ENCODE measurements at regions of chr14 and their contacts with region 1.

Region 1: DNA sequence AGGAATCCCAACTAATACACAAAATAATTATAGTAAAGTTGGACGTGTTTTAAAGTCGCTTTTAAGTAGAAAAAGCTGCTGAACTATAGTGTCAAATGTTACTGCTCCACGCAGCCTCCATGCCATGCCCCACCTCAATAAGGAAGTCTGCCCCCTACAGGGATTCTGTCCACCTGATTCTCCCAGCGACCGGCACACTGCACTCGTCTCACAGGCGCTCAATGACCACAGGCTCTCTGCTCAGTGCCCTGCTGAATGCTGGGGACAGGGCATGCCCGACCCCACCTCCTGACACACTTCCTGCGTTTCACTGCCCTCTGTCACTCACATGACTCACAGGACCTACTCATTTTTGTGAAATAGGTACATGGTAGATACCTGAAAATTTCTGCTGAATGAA is 48.9 kb downstream of the BDKRB1 start:
- DNase-seq: no peak
- H3K4me3 ChIP-seq: no peak overlapping the region
- H3K27ac ChIP-seq: no peak overlapping the region
- H3K27me3 ChIP-seq: no peaks in the 10 kb centered on the region
- CTCF ChIP-seq: peak in 4 of 56 donors; percentile 6 to 19 (median 12)

Region 2: DNA sequence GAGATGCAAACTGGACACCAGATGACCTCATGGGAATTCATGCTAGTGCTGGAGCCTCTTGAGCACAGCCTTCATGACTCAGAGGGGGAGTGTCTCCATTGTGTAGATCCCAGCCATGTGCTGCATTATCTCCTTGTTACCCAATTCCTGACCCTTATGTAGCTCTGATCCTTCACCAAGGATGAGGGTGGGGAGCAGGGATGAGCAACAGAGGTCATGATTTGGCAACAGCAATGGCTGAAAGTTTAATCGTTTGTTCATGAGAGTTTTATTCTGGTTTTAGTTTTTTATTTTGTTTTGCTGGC is 58.5 kb before region 1 on chr14:
- intact Hi-C with region 1: no loop called
- DNase-seq: peak in 1 of 10 donors; percentile 25
- H3K4me3 ChIP-seq: no peak overlapping the region
- H3K27ac ChIP-seq: peak overlapping the region in 6 of 59 donors; percentile 8 to 64 (median 37)
- H3K27me3 ChIP-seq: peaks cover 0 to under 1% (median 0%) of the 10 kb centered on the region in 45 donors
- CTCF ChIP-seq: no peak

Region 3: GRCh38 chr14:96349286-96350075 is 44.5 kb after region 1 on chr14:
- intact Hi-C with region 1: loop called in 1 of 2 experiments (anchors 10 kb)
- DNase-seq: no peak
- H3K4me3 ChIP-seq: no peak overlapping the region
- H3K27ac ChIP-seq: no peak overlapping the region
- H3K27me3 ChIP-seq: no peaks in the 10 kb centered on the region
- CTCF ChIP-seq: no peak